ENCODE measurements at regions of chr6 and their contacts with region 1.

Region 1: DNA sequence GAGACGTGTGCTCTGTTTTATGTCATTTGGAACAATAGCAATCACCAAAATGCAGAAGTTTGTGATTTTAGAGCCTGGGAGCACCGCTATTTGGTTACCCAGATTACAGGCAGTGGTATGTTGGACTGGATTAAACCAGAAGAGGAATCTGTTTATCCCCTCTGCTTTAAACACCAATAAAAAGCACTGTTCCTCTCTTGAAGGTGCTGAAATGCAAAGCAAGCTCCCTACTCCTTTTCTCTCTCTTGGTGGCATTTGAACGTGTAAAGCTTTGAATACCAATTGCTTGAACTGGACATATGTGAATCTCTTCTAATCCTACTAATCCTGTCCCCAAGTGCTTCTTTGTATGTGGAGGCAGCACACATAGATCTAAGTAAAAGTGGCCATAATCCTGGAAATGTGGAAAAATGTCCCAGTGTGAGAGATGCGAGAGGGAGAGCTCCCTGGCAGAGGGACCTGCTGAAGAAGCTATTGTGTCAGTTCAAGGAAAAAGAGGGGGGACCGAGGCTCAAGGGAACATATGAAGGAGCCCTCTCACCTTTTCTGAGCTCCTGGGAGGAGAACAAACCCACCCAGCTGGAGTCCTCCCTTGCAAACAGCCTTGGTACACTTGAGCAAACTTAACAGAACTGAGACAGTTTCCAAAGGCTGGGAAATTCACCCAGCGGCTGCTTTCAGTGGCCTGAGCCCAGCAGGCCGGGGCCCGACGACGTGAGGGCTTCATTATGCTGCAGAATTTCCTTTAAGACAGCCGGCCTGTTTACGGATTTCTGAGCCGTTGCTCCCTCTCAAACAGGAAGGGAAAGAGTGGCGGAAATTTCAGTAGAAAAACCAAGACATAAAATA is 18.8 kb upstream of the OLIG3 start:
- DNase-seq: no peak
- ATAC-seq: no peak
- H3K4me3 Mint-ChIP-seq: no peak overlapping the region
- H3K27ac Mint-ChIP-seq: no peak overlapping the region
- H3K4me1 Mint-ChIP-seq: no peaks in the 10 kb centered on the region
- H3K27me3 Mint-ChIP-seq: peaks cover 61% of the 10 kb centered on the region

Region 2: DNA sequence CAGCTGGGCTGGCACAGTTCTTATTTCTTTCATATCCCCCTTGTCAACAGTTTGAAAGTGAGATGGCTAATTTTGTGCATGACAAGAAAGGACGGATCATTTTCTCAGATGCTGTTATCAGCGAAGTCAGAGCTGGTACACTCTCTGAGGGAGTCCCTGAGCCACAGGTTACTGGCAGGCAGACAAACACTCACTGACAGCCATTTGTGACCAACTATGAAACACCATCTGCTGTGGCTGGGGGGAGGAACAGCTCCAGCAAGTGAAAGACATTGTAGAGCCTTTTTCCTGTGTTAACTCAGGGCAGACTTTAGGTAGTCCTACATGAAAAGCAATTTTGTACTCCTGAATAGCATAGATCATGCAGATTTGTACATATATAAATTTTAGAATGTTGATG is 41.0 kb before region 1 on chr6:
- CTCF ChIA-PET with region 1: no interaction called
- POLR2A ChIA-PET with region 1: no interaction called
- intact Hi-C with region 1: loop called in 1 of 2 experiments (anchors 1 kb)
- DNase-seq: no peak
- ATAC-seq: no peak
- H3K4me3 Mint-ChIP-seq: no peak overlapping the region
- H3K27ac Mint-ChIP-seq: no peak overlapping the region
- H3K4me1 Mint-ChIP-seq: no peaks in the 10 kb centered on the region
- H3K27me3 Mint-ChIP-seq: peaks cover 15% of the 10 kb centered on the region

Region 3: DNA sequence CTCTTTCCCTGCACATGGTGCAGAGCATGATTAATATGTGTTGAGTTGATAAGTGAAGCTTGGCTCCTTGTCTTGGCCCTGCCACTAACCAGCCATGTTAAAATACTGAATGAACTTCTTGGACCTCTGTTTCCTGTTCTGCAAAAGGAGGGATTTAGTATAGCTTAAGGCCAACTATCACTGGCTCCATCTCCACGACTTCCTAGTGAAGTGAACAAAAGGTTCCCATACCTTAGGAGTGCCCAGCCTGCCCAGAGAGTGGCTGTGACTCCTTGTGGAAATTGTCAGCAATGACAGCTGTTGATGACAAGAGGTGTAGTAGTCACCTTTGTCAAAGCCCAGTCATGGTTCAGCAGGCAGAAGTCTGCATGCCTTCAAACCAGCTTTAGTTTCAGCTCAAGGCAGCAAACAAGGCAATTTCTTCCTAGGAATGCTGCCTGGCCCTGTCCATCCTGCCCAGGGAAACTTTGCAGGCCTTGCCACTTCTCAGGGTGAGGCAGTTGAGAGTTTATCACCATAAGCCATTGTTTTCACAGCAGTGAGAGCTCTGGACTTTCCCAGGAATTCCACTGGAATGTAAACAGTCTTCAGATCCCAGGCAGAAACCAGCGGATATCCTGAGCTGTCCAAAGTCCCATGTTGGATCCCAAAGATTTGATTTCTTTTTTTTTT is 184.4 kb after region 1 on chr6:
- CTCF ChIA-PET with region 1: no interaction called
- POLR2A ChIA-PET with region 1: no interaction called
- intact Hi-C with region 1: no loop called
- DNase-seq: peak; percentile 46
- ATAC-seq: peak; percentile 43
- H3K4me3 Mint-ChIP-seq: no peak overlapping the region
- H3K27ac Mint-ChIP-seq: peak overlapping the region; percentile 60
- H3K4me1 Mint-ChIP-seq: peaks cover 47% of the 10 kb centered on the region
- H3K27me3 Mint-ChIP-seq: peaks cover 7% of the 10 kb centered on the region

Region 4: GRCh38 chr6:138814179-138814834 is 1301.3 kb after region 1 on chr6:
- CTCF ChIA-PET with region 1: no interaction called
- POLR2A ChIA-PET with region 1: no interaction called
- intact Hi-C with region 1: no loop called
- DNase-seq: no peak
- ATAC-seq: no peak
- H3K4me3 Mint-ChIP-seq: no peak overlapping the region
- H3K27ac Mint-ChIP-seq: no peak overlapping the region
- H3K4me1 Mint-ChIP-seq: peaks cover 20% of the 10 kb centered on the region
- H3K27me3 Mint-ChIP-seq: no peaks in the 10 kb centered on the region